Left ventricle myocardium inferior (tissue), 1 donor: ENCODE measurements at regions of chr11 and their contacts with region 1.

Region 1: DNA sequence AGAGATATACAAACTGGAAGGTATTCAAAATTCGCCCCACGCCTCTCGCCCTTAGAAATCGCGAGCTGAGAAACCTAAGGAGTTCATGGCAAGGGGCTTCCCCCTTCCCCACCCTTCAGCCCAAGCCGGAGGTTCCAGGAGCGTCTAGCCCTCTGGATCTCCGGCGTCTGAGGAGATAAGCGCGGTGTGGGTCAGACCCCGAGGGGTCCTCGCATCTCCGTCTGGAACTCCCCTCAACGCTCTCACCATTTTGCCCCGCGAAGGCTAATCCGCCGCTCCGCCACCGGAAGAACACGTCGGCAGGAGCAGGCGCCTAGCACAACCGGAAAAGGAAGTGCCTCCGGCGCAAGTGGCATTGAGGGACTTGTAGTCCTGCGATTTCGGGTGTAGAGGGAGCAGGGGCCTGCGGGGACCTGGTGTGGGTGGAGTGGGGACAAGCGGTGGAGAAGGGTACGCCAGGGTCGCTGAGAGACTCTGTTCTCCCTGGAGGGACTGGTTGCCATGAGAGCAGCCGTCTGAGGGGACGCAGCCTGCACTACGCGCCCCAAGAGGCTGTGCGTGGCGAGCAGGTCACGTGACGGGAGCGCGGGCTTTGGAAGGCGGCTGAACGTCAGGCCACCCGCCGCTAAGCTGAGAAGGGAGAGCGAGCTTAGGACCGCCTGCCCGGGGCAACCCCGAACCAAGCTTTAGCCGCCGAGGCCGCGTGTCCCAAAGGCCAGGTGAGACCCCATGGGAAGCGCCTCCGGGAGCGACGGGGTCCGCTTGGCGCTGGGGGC is at the starts of genes FEN1 and TMEM258:
- DNase-seq: peak; percentile 89
- H3K4me3 ChIP-seq: peak within 1 kb of the TSS; percentile 88
- H3K27ac ChIP-seq: peak within 1 kb of the TSS; percentile 96
- H3K4me1 ChIP-seq: peaks cover 33% of the 10 kb centered on the region
- H3K27me3 ChIP-seq: no peaks in the 10 kb centered on the region
- CTCF ChIP-seq: peak; percentile 29
- total RNA-seq, gene FEN1: 5.8 TPM
- total RNA-seq, gene TMEM258: 117 TPM

Region 2: GRCh38 chr11:61899146-61899841 is 106.8 kb after region 1 on chr11:
- intact Hi-C with region 1: loop called (anchors 10 kb)
- DNase-seq: peak; percentile 83
- H3K4me3 ChIP-seq: no peak overlapping the region
- H3K27ac ChIP-seq: peak overlapping the region; percentile 61
- H3K4me1 ChIP-seq: peaks cover 22% of the 10 kb centered on the region
- H3K27me3 ChIP-seq: no peaks in the 10 kb centered on the region
- CTCF ChIP-seq: peak; percentile 100

Region 3: GRCh38 chr11:61947486-61948210 is 155.2 kb after region 1 on chr11:
- intact Hi-C with region 1: loop called (anchors 10 kb)
- DNase-seq: peak; percentile 85
- H3K4me3 ChIP-seq: no peak overlapping the region
- H3K27ac ChIP-seq: peak overlapping the region; percentile 46
- H3K4me1 ChIP-seq: peaks cover 32% of the 10 kb centered on the region
- H3K27me3 ChIP-seq: no peaks in the 10 kb centered on the region
- CTCF ChIP-seq: peak; percentile 94

Region 4: DNA sequence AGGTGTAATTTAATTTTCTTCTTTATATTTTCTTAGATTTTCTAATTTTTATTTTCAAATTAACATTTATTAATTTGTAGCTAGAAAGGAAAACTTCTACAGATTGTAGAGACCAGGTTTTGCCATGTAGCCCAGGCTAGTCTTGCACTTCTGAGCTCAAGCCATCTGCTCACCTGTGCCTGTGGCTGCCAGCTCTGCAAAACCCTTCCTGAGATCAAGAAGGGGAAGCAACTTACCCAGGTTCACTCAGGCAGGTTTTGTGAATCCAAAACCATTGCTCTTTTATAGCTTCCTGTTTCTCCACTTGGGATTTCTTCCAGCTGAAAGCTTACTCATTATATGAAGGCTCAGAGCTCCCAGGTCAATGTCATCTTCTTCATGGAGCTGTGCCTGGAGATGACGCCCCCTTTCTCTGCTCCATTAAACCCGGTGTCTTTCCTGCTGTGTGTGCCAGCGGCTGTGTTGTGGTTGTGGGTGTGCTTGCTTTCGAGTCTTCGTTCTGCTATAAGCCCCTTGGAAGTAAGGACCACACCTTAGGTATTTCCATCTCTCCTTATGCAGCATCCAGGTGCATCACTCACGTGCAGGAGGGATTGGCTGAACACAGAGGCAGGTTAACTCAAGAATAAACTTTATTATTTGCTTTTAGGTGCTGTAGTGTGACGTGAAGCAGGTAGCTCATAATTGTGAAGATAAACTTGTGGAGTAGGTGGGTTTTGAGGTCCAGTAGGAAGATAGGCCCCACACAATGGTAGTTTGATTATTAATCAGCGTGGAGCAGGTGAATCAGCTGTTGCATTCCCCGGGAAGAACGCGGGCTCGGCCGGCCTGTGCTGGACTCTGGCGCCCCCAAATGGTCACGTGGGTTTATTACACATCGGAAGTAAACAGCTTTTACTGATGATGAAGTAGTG is 289.1 kb after region 1 on chr11:
- intact Hi-C with region 1: loop called (anchors 10 kb)
- DNase-seq: peak; percentile 79
- H3K4me3 ChIP-seq: no peak overlapping the region
- H3K27ac ChIP-seq: no peak overlapping the region
- H3K4me1 ChIP-seq: peaks cover 7% of the 10 kb centered on the region
- H3K27me3 ChIP-seq: no peaks in the 10 kb centered on the region
- CTCF ChIP-seq: peak; percentile 94

Region 5: DNA sequence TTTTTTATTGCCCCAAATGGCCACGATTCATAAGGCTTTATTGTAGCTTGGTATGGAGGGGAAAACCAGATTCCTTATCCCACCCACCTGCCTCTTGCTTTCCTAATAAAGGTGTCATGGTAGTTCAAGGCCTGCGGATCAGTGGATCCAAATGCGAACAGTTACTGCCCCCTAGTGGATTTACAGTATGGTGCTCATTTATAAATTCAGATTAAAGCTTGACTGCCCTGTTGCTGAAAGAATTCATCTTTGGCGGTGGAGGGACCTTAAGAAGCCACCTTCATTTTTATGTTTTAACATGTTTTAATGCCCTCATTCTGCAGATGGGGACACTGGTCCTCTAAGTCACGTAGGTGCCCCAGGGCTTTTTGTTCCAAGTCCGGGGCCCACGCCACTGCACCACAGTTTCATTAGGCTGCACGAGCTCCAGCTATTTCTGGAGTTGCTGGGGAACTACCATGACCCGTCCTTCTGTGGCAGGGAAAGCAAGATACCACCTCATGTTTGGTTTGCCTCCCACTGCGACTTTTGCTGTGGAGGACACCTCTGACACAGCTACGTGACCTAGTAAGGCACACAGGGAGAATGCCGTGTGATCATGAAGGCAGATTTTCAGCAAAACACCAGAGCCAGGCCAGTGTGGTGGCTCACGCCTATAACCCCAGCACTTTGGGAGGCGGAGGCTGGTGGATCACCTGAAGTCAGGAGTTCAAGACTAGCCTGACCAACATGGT is 315.7 kb after region 1 on chr11:
- intact Hi-C with region 1: loop called (anchors 5 kb)
- DNase-seq: no peak
- H3K4me3 ChIP-seq: no peak overlapping the region
- H3K27ac ChIP-seq: no peak overlapping the region
- H3K4me1 ChIP-seq: peaks cover 45% of the 10 kb centered on the region
- H3K27me3 ChIP-seq: no peaks in the 10 kb centered on the region
- CTCF ChIP-seq: peak; percentile 87